GM10248 (cell line): ENCODE measurements at regions of chr5 and their contacts with region 1.

Region 1: DNA sequence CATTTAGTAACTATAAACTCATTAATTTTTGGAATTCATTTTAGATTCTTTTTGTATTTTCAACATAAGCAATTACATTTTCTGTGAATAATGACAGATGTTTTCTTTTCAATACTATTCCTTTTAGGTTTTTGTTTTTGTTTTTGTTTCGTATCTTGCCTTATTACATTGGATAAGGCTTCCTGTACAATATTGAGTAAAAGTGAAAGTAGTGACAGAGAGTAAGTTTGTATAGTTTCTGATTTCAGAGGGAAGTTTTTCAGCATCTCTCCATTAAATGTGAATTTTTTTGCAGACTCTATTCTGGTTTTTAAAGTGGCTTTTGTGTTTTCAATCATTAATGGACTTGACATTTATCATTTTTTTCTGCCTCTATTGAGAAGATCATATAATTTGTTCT is 12.8 kb upstream of the CAMK4 start:
- DNase-seq: no peak
- CTCF ChIP-seq: no peak

Region 2: GRCh38 chr5:111165058-111165457 is 46.3 kb before region 1 on chr5:
- CTCF ChIA-PET with region 1: no interaction called
- POLR2A ChIA-PET with region 1: no interaction called
- DNase-seq: no peak
- CTCF ChIP-seq: no peak

Region 3: GRCh38 chr5:111197523-111197922 is 13.8 kb before region 1 on chr5:
- CTCF ChIA-PET with region 1: interaction called, 12 read pairs
- POLR2A ChIA-PET with region 1: no interaction called
- DNase-seq: no peak
- CTCF ChIP-seq: no peak

Region 4: DNA sequence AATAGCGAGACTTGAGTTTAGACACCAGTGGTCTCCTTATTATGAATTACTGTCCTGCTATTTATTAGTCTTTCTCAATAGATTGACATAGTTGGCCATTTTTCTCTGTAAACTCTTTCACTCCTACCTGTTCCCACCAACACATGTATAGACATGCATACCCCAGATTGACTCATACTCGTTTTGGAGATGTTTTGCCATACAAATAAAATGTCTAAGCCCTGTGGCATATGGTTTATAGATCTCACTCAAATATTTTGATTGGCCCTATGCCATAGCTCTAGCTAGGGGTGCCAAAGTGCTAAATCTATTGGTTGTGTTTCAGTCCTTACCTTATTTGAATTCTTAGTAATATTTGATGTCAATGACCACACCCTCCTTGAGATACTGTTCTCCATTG is 55.1 kb after region 1 on chr5:
- CTCF ChIA-PET with region 1: no interaction called
- POLR2A ChIA-PET with region 1: no interaction called
- DNase-seq: no peak
- CTCF ChIP-seq: no peak